H1 (cell line): ENCODE measurements at regions of chr9 and their contacts with region 1.

Region 1: GRCh38 chr9:127444921-127445850 is 6.0 kb downstream of the RPL12 start:
- DNase-seq: peak in 1 of 2 experiments; percentile 54
- H3K4me3 ChIP-seq: no peak overlapping the region
- H3K27ac ChIP-seq: no peak overlapping the region
- H3K4me1 ChIP-seq: peaks cover 0 to 4% (median under 1%) of the 10 kb centered on the region in 4 experiments; a peak in 2 of 7 replicates
- H3K27me3 ChIP-seq: no peaks in the 10 kb centered on the region
- CTCF ChIP-seq: no peak
- EP300 ChIP-seq: no peak
- POLR2A ChIP-seq: peak; percentile 54 to 67; a peak in 2 of 3 replicates
- RAD21 ChIP-seq: no peak

Region 2: DNA sequence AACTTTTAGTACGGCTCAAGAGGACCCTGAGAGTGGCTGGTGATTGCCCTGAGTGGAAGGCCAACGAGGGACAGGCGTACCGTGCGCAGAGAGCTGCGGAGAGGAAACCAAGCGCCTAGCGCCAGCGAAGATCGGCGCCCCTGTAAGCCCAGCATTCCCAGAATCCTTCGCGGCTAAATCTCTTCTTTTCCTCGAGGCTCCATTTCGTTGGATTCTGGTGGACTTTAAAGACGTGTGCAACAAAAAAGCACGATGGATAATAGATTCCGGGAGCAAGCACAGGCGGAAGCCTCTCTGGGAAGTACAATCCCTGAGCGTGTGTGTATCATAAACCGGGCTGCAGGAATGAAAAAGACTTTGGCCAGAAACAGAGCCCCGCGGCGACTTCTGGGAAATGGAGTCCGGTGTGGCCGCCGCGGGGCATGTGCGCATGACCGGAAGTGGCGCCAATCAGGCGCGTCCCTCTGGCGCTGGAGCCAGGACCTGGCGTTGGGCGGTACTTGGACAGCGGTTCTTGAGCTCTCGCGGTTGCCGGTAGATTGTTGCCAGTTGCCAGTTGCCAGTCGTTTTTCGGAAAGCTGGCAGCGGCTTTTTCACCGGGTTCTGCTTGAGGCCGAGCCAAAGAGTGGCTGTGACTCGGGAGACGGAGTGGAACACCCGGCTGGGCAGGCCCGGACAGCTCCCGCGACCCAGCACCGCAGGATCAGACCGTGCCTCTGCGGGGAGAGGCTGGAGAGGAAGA is 21.1 kb before region 1 on chr9 and contains the start of gene ZNF79:
- CTCF ChIA-PET with region 1: no interaction called
- POLR2A ChIA-PET with region 1: interaction called, 59 read pairs
- DNase-seq: peak; percentile 82 to 95
- H3K4me3 ChIP-seq: peak within 1 kb of the TSS; percentile 87 to 96 (median 94)
- H3K27ac ChIP-seq: peak within 1 kb of the TSS; percentile 94
- H3K4me1 ChIP-seq: peaks cover 0 to 12% (median 6%) of the 10 kb centered on the region in 4 experiments; a peak in 5 of 7 replicates
- H3K27me3 ChIP-seq: no peaks in the 10 kb centered on the region
- CTCF ChIP-seq: no peak
- EP300 ChIP-seq: no peak
- POLR2A ChIP-seq: peak; percentile 80 to 92
- RAD21 ChIP-seq: no peak
- total RNA-seq, gene ZNF79: 7.4 and 7.6 TPM in 2 replicates